Activated CD8-positive, alpha-beta T cell treated with anti-CD3 and anti-CD28 coated beads, Interleukin-2, amount 10 ng/mL, durations not matched to agents 7 days and 5 days (primary cell): ENCODE measurements at regions of chr1 and their contacts with region 1.

Region 1: GRCh38 chr1:208025031-208025430 is 114.1 kb upstream of the CD34 start:
- DNase-seq: no peak
- ATAC-seq: no peak
- H3K4me3 Mint-ChIP-seq: no peak overlapping the region
- H3K27ac Mint-ChIP-seq: no peak overlapping the region
- H3K4me1 Mint-ChIP-seq: no peaks in the 10 kb centered on the region
- H3K27me3 Mint-ChIP-seq: peaks cover 9% of the 10 kb centered on the region

Region 2: GRCh38 chr1:207935166-207935583 is 89.9 kb before region 1 on chr1:
- CTCF ChIA-PET with region 1: no interaction called
- POLR2A ChIA-PET with region 1: no interaction called
- DNase-seq: no peak
- ATAC-seq: no peak
- H3K4me3 Mint-ChIP-seq: no peak overlapping the region
- H3K27ac Mint-ChIP-seq: no peak overlapping the region
- H3K4me1 Mint-ChIP-seq: no peaks in the 10 kb centered on the region
- H3K27me3 Mint-ChIP-seq: peaks cover 35% of the 10 kb centered on the region

Region 3: GRCh38 chr1:208045463-208046260 is 20.6 kb after region 1 on chr1:
- CTCF ChIA-PET with region 1: interaction called, 11 read pairs
- POLR2A ChIA-PET with region 1: no interaction called
- DNase-seq: no peak
- ATAC-seq: no peak
- H3K4me3 Mint-ChIP-seq: no peak overlapping the region
- H3K27ac Mint-ChIP-seq: no peak overlapping the region
- H3K4me1 Mint-ChIP-seq: peaks cover 26% of the 10 kb centered on the region
- H3K27me3 Mint-ChIP-seq: peaks cover 3% of the 10 kb centered on the region

Region 4: DNA sequence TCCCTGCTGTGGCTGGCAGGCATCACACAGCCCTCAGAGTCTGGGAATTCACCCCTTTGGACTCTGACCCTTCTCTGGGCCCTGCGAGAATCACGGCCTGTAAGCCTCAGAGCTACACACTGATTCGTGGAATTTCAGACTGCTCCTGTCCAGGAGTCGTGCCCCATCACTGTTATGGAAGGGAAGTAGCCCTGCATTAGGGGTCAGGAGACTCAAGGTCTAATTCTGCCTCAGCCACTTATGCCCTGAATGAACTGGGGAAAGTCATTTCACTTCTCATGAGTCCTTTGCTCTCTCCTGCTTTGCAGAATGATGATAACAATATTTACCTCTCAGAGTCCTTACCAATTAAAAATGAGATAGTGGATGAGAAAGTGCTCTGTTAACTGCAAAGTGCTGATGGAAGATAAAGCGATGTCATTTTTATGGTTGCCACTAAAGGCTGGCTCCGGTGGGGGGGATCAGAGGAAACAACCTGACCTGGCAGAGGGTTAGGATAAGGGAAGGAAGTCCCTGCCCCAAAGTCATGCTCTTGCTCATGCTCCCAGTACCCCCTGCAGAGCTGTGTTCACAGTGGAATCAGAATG is 34.5 kb after region 1 on chr1:
- CTCF ChIA-PET with region 1: no interaction called
- POLR2A ChIA-PET with region 1: no interaction called
- DNase-seq: no peak
- ATAC-seq: no peak
- H3K4me3 Mint-ChIP-seq: no peak overlapping the region
- H3K27ac Mint-ChIP-seq: no peak overlapping the region
- H3K4me1 Mint-ChIP-seq: no peaks in the 10 kb centered on the region
- H3K27me3 Mint-ChIP-seq: peaks cover 13% of the 10 kb centered on the region

Region 5: GRCh38 chr1:208071435-208072031 is 46.5 kb after region 1 on chr1:
- CTCF ChIA-PET with region 1: interaction called, 12 read pairs
- POLR2A ChIA-PET with region 1: no interaction called
- DNase-seq: no peak
- ATAC-seq: no peak
- H3K4me3 Mint-ChIP-seq: no peak overlapping the region
- H3K27ac Mint-ChIP-seq: no peak overlapping the region
- H3K4me1 Mint-ChIP-seq: no peaks in the 10 kb centered on the region
- H3K27me3 Mint-ChIP-seq: peaks cover 2% of the 10 kb centered on the region

Region 6: DNA sequence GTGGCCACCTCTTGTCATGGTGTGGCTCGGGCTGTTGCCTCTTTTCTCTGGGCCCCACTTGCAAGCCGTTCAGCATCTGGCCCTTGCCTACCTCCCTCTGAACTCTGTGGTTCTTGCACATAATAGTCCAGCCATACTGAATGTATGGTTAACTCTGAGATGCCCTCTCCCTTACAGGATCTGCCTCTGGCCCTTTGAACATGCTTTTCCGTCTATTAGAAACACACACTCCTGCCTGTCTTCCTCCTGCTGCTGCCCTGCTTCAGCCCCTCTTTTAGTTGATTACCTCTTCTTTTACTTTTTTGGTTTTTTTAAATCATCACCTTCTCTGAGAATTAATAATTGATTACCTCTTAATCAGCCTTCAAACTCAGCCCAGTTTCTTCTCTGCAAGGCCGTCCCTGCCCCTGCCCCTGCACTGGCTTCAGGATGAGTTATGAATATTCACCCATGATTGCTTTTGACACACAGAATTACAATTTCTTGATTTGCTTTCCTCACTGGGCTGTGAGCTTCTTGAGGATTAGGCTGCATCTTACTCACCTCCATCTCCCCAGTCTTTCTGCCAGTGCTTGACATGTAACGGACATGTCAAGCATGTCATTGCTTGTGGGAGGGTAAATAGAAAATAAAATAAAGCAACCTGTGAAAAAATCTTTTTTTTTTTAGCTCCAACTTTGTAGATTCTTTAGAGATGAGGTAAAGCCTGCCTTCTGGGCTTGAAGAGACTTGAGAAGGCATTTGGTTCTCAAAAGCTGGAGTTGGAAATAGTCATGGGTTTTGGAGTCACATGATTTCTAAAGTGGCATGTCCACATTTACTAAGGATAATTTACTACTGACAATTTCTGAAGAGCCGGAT is 60.9 kb after region 1 on chr1:
- CTCF ChIA-PET with region 1: interaction called, 21 read pairs
- POLR2A ChIA-PET with region 1: interaction called, 3 read pairs
- DNase-seq: no peak
- ATAC-seq: no peak
- H3K4me3 Mint-ChIP-seq: peak overlapping the region; percentile 74
- H3K27ac Mint-ChIP-seq: peak overlapping the region; percentile 88
- H3K4me1 Mint-ChIP-seq: peaks cover 19% of the 10 kb centered on the region
- H3K27me3 Mint-ChIP-seq: no peaks in the 10 kb centered on the region

Region 7: GRCh38 chr1:208093754-208094719 is 69.0 kb after region 1 on chr1:
- CTCF ChIA-PET with region 1: interaction called, 90 read pairs
- POLR2A ChIA-PET with region 1: interaction called, 3 read pairs
- DNase-seq: peak; percentile 75
- ATAC-seq: peak; percentile 70
- H3K4me3 Mint-ChIP-seq: no peak overlapping the region
- H3K27ac Mint-ChIP-seq: no peak overlapping the region
- H3K4me1 Mint-ChIP-seq: no peaks in the 10 kb centered on the region
- H3K27me3 Mint-ChIP-seq: no peaks in the 10 kb centered on the region

Region 8: GRCh38 chr1:208132287-208132883 is 107.4 kb after region 1 on chr1:
- CTCF ChIA-PET with region 1: no interaction called
- POLR2A ChIA-PET with region 1: no interaction called
- DNase-seq: peak; percentile 70
- ATAC-seq: peak; percentile 89
- H3K4me3 Mint-ChIP-seq: no peak overlapping the region
- H3K27ac Mint-ChIP-seq: no peak overlapping the region
- H3K4me1 Mint-ChIP-seq: peaks cover 5% of the 10 kb centered on the region
- H3K27me3 Mint-ChIP-seq: peaks cover 13% of the 10 kb centered on the region

Region 9: DNA sequence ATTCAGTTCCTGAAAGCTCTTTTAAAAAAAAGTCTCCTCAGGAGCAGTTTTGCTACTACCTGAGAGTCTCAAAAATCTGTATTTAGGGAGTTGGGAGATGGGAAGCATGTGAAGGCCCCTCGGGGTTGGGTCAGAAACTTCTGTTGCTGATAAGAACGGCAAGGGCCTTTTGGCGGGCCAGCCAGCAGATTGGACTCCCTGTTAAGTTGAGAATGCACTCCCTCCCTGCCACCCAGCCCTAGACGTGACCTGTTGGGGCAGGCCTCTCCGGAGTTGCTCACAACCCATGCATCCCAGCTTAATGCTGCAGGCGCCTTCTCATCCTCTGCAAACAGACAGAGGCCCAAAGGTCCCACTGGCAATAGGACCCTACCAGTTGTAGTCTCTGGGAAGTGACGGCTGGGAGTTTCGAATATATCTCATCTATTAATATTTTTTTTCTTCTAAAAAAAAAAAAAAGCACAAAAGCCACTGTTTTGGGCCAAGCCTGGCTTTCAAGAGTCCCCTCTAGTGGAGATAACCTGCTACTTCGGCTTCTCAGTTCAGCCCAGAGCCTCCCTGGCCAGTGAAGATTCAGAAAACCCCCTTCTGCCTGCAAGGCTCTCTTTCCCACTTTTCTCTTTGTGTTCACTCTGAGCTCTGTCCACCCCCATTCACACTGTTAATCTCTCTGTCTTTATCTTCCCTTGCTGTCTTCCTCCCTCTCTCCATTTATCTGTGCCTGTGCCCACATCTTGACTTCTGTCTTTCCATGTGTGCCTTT is 213.9 kb after region 1 on chr1:
- CTCF ChIA-PET with region 1: interaction called, 87 read pairs
- POLR2A ChIA-PET with region 1: no interaction called
- DNase-seq: peak; percentile 35
- ATAC-seq: no peak
- H3K4me3 Mint-ChIP-seq: no peak overlapping the region
- H3K27ac Mint-ChIP-seq: no peak overlapping the region
- H3K4me1 Mint-ChIP-seq: peaks cover 24% of the 10 kb centered on the region
- H3K27me3 Mint-ChIP-seq: peaks cover 79% of the 10 kb centered on the region

Region 10: DNA sequence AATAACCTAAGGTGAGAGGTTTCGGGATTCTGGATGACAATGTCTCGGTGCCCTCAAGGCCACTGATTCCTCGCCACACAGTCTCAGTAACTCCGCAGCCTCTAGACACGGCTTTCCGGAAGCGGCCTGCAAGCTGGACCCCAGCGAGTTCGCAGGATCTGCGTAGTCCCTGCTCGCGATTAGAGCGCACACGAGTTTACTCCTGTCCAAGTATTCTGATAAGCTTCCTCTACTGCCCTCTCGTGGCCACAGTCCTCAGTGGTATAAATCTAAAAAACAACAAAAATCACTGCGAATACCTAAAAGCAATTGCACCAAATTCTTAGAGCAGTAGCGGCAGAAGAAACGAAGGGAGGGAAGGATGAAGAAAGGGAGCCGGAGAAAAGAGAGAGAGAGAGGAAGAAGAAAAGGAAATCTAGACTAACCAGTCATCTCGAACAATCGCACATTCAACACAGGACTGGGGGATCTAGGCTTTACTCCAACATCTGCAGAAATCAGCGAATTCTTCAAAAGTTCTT is 220.2 kb after region 1 on chr1:
- CTCF ChIA-PET with region 1: interaction called, 87 read pairs
- POLR2A ChIA-PET with region 1: no interaction called
- DNase-seq: peak; percentile 89
- ATAC-seq: peak; percentile 70
- H3K4me3 Mint-ChIP-seq: peak overlapping the region; percentile 75
- H3K27ac Mint-ChIP-seq: no peak overlapping the region
- H3K4me1 Mint-ChIP-seq: peaks cover 15% of the 10 kb centered on the region
- H3K27me3 Mint-ChIP-seq: peaks cover 49% of the 10 kb centered on the region